Activated B cell treated with CpG ODN at 0.5 μM for 24 hours (primary cell): ENCODE measurements at regions of chr3 and their contacts with region 1.

Region 1: GRCh38 chr3:13479581-13480339 is at the start of gene HDAC11:
- DNase-seq: peak; percentile 97
- ATAC-seq: peak; percentile 97
- H3K4me3 Mint-ChIP-seq: peak within 1 kb of the TSS; percentile 90
- H3K27ac Mint-ChIP-seq: peak within 1 kb of the TSS; percentile 79
- H3K4me1 Mint-ChIP-seq: peaks cover 2% of the 10 kb centered on the region
- H3K27me3 Mint-ChIP-seq: peaks cover under 1% of the 10 kb centered on the region
- CTCF ChIP-seq: no peak
- total RNA-seq, gene HDAC11: 1.6 and 2.5 TPM in 2 replicates

Region 2: GRCh38 chr3:12967606-12968351 is 512.0 kb before region 1 on chr3:
- CTCF ChIA-PET with region 1: no interaction called
- POLR2A ChIA-PET with region 1: no interaction called
- intact Hi-C with region 1: loop called (anchors 1 kb)
- DNase-seq: peak; percentile 77
- ATAC-seq: peak; percentile 96
- H3K4me3 Mint-ChIP-seq: peak overlapping the region; percentile 72
- H3K27ac Mint-ChIP-seq: peak overlapping the region; percentile 20
- H3K4me1 Mint-ChIP-seq: peaks cover 86% of the 10 kb centered on the region
- H3K27me3 Mint-ChIP-seq: no peaks in the 10 kb centered on the region
- CTCF ChIP-seq: no peak

Region 3: GRCh38 chr3:13353936-13354542 is 125.7 kb before region 1 on chr3:
- CTCF ChIA-PET with region 1: no interaction called
- POLR2A ChIA-PET with region 1: no interaction called
- intact Hi-C with region 1: no loop called
- DNase-seq: no peak
- ATAC-seq: no peak
- H3K4me3 Mint-ChIP-seq: no peak overlapping the region
- H3K27ac Mint-ChIP-seq: no peak overlapping the region
- H3K4me1 Mint-ChIP-seq: peaks cover 20% of the 10 kb centered on the region
- H3K27me3 Mint-ChIP-seq: no peaks in the 10 kb centered on the region
- CTCF ChIP-seq: no peak

Region 4: DNA sequence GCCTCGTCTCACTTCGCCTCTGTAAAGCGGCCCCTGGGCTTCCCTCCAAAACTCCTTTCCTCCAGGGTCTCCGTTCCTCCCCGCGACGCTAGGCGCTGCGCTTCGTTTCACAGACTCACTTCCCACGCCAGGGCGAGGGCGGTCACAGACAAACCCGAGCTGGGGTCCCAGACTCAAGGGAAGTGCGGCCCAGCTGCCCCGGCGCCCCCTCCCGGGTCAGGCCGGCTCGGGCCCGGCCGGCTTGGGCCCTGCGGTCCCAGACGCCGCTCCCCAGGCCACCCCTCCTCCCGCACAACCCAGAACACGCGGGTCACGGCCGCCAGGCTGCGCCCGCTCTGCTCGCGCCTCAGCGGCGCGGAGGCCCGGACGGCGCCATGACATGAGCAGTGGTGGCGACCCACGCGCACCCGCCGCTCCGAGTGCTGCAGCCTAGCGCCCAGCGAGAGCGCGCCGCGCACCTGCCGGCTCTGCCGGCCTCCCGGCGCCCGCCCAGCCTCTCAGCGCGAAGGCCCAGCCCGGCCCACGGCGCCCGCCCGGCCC is 60.2 kb before region 1 on chr3:
- CTCF ChIA-PET with region 1: no interaction called
- POLR2A ChIA-PET with region 1: interaction called, 6 read pairs
- intact Hi-C with region 1: loop called (anchors 2 kb)
- DNase-seq: peak; percentile 69
- ATAC-seq: peak; percentile 59
- H3K4me3 Mint-ChIP-seq: peak overlapping the region; percentile 91
- H3K27ac Mint-ChIP-seq: peak overlapping the region; percentile 98
- H3K4me1 Mint-ChIP-seq: peaks cover 62% of the 10 kb centered on the region
- H3K27me3 Mint-ChIP-seq: no peaks in the 10 kb centered on the region
- CTCF ChIP-seq: no peak

Region 5: DNA sequence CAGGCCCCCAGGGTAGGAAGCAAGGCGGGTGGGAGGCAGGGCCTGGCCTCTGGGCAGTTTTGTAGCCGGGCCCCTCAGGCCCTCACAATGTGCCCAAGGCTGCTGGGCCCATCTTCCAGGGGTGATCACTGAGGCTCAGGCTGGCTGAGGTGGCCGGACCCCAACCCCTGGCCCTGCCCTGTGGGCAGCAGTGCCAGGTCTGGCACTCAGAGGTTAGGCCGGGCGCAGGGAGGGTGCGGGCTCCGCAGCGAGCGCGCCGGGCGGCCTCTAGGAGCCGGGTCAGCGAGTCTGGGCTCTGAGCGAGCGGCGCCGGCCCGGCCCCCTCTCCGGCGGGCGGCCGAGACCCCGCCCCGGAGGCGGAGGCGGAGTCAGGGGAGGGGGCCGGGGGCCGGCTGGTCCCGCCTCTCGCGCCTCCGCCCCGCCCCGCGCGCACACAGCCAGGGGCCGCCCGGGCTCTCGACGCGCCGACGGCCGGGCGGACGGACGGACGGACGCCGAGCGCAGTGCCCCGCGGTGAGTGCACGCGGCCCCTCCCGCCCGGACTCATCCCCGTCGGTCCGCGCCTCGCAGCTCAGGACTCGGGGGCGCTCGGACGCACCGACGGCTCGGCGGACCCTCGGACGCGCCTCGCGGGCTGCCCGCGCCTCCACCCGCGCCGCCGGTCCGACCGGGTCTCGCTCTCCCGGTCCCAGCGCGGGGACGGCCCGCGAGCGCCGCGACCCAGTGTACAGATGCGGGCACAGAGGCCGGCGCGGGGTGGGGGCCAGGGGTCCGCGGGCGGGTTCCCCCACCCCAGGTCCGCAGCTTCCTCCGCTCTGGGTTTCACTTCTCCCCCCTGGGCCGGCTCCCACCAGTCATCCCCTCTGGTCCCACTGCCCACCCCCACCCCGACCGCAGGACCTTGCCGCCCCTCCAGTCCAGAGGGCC is 69.2 kb after region 1 on chr3 and contains the start of gene FBLN2:
- CTCF ChIA-PET with region 1: no interaction called
- POLR2A ChIA-PET with region 1: no interaction called
- intact Hi-C with region 1: loop called (anchors 2 kb)
- DNase-seq: peak; percentile 64
- ATAC-seq: peak; percentile 82
- H3K4me3 Mint-ChIP-seq: peak within 1 kb of the TSS; percentile 79
- H3K27ac Mint-ChIP-seq: peak within 1 kb of the TSS; percentile 68
- H3K4me1 Mint-ChIP-seq: peaks cover 52% of the 10 kb centered on the region
- H3K27me3 Mint-ChIP-seq: peaks cover 15% of the 10 kb centered on the region
- CTCF ChIP-seq: no peak
- total RNA-seq, gene FBLN2: 1.3 and 1.6 TPM in 2 replicates